HAP-1 (cell line): ENCODE measurements at regions of chr5 and their contacts with region 1.

Region 1: GRCh38 chr5:36690041-36690961 is 83.9 kb downstream of the SLC1A3 start:
- DNase-seq: peak; percentile 82 to 89
- H3K4me3 ChIP-seq: peak overlapping the region; percentile 38
- H3K4me1 ChIP-seq: peaks cover 16% of the 10 kb centered on the region
- H3K27me3 ChIP-seq: no peaks in the 10 kb centered on the region

Region 2: DNA sequence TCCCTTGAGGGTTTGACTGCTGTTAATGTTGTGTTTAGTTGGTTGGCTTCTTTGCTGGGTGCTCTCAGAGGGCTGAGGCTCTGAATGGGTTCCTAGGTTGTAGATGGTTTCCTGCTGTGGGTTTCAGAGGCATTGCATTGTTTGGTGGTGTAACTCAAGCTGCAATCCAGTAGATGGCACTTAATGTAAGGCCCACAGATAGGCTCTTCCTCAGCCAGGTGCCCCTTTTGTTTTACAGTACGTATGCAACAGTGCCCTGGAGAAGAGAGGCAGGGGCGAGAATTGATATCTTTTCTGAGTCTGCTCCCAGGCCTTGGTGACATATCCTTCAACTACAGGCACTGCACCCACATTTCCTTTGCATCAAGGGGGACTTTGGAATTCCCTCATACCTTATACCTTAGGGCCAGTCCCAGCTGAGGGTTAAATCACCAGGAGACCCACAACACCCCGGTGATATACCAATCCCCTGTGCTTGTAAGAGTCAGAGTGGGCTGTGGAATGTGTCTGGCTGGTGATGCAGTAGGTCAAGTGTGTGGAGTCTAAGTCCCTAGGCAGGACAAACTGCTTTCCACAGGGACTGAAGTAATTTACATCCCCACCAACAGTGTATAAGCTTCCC is 616.6 kb before region 1 on chr5:
- in situ Hi-C with region 1: loop called (anchors 25 kb)
- DNase-seq: peak; percentile 36 to 48
- H3K4me3 ChIP-seq: no peak overlapping the region
- H3K4me1 ChIP-seq: peaks cover 8% of the 10 kb centered on the region
- H3K27me3 ChIP-seq: no peaks in the 10 kb centered on the region; the same call in 1 of the 2 replicates

Region 3: GRCh38 chr5:36414869-36415282 is 275.4 kb before region 1 on chr5:
- in situ Hi-C with region 1: loop called (anchors 10 kb)
- DNase-seq: peak; percentile 19 to 56
- H3K4me3 ChIP-seq: no peak overlapping the region
- H3K4me1 ChIP-seq: no peaks in the 10 kb centered on the region; the same call in 1 of the 2 replicates
- H3K27me3 ChIP-seq: peaks cover 6% of the 10 kb centered on the region; the same call in 1 of the 2 replicates